PC-9 (cell line): ENCODE measurements at regions of chr1 and their contacts with region 1.

Region 1: DNA sequence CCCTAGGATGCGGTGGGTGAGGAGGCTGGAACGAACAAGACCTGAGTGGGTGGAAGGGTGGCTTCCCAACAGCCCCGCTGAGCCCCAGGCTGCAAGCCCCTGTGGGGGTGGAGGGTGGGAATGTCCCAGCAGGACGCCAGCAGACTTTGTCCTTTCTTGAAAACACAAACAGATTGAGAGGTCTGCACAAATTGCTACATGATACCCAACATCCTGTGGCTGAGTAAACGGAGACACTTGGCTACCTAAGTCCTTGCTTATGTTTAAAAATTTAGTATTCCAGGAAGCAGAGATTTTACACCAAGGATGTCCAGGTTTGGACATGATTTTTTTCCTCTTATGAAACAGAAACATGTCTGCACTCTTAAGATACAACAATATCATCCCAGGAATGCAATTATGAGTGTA is 11.8 kb upstream of the F3 start:
- DNase-seq: no peak
- H3K4me3 ChIP-seq: no peak overlapping the region
- H3K27ac ChIP-seq: no peak overlapping the region
- H3K4me1 ChIP-seq: peaks cover 13% of the 10 kb centered on the region
- H3K27me3 ChIP-seq: no peaks in the 10 kb centered on the region
- CTCF ChIP-seq: no peak

Region 2: DNA sequence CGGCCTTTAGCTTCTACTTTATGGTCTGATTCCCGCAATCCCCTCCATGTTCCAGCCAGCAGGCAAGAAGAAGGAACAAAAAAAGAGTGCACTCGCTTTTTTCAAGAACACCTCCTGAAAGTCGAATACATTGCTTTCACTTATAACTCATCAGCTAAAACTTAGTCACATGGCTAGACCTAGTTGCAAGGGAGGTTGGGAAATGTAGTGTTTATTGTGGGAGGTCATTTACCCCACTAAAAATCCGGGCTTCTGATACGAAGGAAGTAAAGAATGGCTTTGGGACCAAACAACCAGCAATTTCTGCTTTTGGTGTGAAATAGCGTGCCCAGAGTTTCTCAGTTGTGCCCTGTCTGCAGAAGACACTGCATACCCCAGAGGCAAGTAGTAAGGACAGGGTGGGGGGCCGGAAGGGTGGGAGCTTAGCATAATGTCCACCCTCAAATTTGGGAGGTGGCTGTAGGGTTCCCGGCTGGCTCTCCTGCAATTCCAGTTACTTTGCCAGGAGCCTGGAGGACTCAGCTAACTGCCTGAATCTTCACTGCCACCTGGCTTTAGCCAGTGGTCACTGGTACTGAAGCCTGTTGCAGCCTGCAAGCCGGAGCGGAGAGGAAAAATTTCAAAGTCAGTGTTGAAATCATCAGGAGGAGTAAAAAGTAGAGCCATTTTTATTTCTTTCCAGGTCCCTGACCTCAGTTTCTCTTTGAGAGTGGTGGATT is 45.9 kb after region 1 on chr1:
- CTCF ChIA-PET with region 1: no interaction called
- POLR2A ChIA-PET with region 1: interaction called, 11 read pairs
- intact Hi-C with region 1: no loop called
- DNase-seq: peak; percentile 43 to 51
- H3K4me3 ChIP-seq: no peak overlapping the region
- H3K27ac ChIP-seq: no peak overlapping the region
- H3K4me1 ChIP-seq: peaks cover 47% of the 10 kb centered on the region
- H3K27me3 ChIP-seq: no peaks in the 10 kb centered on the region
- CTCF ChIP-seq: peak; percentile 71

Region 3: DNA sequence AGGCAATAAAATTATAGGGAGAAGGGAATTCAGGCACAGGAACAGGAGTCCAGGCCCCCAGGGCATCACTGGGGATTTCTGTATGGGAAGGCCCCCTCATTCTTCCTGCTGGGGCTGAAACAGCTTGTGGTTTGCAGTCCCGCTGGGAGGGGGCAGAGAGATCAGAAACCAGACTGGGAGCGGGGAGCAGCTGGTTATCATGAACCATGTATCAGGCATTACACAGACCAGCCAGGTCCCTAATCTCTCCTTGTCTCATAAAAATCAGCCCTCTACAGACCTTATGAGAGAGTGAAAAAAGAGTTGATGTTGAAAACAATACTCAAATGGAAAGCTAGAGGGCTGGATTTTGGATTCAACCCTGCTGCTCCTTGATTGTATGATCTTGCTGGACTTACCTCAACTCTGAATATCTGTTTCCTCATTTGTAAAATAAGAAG is 81.7 kb after region 1 on chr1:
- CTCF ChIA-PET with region 1: no interaction called
- POLR2A ChIA-PET with region 1: no interaction called
- intact Hi-C with region 1: no loop called
- DNase-seq: no peak
- H3K4me3 ChIP-seq: no peak overlapping the region
- H3K27ac ChIP-seq: no peak overlapping the region
- H3K4me1 ChIP-seq: peaks cover 24% of the 10 kb centered on the region
- H3K27me3 ChIP-seq: no peaks in the 10 kb centered on the region
- CTCF ChIP-seq: no peak

Region 4: DNA sequence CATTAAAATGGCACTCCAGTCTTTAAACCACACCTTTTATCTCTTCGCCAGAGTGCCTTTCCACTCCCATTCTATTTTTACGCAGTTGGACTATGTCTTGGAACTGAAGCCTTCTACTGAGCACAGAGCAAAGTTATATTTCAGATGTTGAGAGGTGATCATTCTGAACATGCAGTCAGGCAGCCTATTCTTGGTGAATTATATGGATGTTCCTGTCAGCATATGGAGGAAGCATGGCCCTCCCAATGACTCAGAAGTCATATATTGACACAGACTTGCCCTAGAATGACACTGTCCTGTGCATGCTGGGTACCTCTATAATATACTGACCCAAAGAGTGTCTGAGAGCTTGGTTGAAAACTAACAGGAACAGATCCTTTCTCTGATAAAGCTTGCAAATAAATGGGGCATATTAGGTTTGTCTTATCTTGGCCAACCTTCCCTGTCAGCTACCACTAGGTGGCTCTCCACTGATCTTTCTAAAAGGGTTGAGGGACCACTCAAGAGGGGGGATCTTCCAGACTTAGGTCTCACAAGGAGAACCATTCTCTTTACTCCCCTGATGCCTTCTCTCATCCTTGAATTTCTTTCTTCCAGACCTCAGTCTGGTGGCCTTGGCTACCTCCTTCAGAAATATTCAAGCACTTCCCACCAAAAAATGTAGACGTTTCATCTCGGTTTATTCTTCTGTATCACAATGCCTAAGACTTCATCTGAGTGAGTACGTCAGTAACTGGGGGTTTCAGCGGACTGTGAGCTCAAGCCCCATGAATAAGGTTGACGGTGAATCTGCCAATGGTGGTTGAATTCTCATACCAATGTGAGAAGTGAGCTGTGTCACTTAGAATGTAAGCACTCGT is 531.2 kb after region 1 on chr1:
- CTCF ChIA-PET with region 1: no interaction called
- POLR2A ChIA-PET with region 1: no interaction called
- intact Hi-C with region 1: no loop called
- DNase-seq: peak in 1 of 2 experiments; percentile 66
- H3K4me3 ChIP-seq: no peak overlapping the region
- H3K27ac ChIP-seq: no peak overlapping the region
- H3K4me1 ChIP-seq: peaks cover 24% of the 10 kb centered on the region
- H3K27me3 ChIP-seq: peaks cover 12% of the 10 kb centered on the region
- CTCF ChIP-seq: peak; percentile 83